CD4-positive, alpha-beta memory T cell (primary cell): ENCODE measurements at regions of chr14 and their contacts with region 1.

Region 1: DNA sequence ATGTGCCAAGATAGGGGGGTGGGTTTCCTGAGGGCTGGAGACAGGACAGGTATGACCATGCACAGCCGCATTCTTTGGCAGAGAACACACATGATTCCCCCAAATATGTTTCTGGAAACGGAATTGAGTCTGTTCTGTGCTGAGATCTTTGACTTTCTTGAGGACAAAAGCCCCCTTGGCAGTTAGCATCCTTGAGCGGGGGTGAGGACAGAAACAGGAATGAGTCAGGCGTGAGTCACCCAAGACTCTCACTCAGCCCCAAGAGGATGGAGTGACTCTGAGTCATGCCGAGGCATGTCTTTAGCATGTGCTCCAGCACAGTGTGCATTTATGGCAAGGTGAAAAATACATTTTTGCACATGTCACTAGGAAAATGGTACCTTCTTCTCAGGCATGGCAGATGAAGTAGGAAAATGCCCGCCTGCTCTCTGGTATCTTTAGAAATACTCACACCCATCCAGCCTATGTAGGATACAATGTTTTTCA is 52.1 kb downstream of the DAD1 start:
- DNase-seq: peak in 4 of 5 donors; percentile 54 to 97 (median 62)
- H3K4me3 ChIP-seq: peak overlapping the region; percentile 13 to 46
- H3K4me3 Mint-ChIP-seq: peak overlapping the region; percentile 69 to 91 (median 85)
- H3K27ac ChIP-seq: peak overlapping the region; percentile 72
- H3K27ac Mint-ChIP-seq: peak overlapping the region; percentile 92 to 100 (median 98)
- H3K4me1 ChIP-seq: peaks cover 99% of the 10 kb centered on the region
- H3K4me1 Mint-ChIP-seq: peaks cover 86 to 100% (median 91%) of the 10 kb centered on the region in 4 donors
- H3K27me3 ChIP-seq: no peaks in the 10 kb centered on the region
- H3K27me3 Mint-ChIP-seq: no peaks in the 10 kb centered on the region

Region 2: GRCh38 chr14:21419528-21419927 is 1117.4 kb before region 1 on chr14:
- CTCF ChIA-PET with region 1: no interaction called
- POLR2A ChIA-PET with region 1: no interaction called
- intact Hi-C with region 1: no loop called
- DNase-seq: no peak
- H3K4me3 ChIP-seq: no peak overlapping the region
- H3K4me3 Mint-ChIP-seq: no peak overlapping the region
- H3K27ac ChIP-seq: no peak overlapping the region
- H3K27ac Mint-ChIP-seq: no peak overlapping the region
- H3K4me1 ChIP-seq: no peaks in the 10 kb centered on the region
- H3K4me1 Mint-ChIP-seq: peaks cover 0 to 3% (median 0%) of the 10 kb centered on the region in 4 donors
- H3K27me3 ChIP-seq: no peaks in the 10 kb centered on the region
- H3K27me3 Mint-ChIP-seq: no peaks in the 10 kb centered on the region

Region 3: GRCh38 chr14:21852061-21852664 is 684.7 kb before region 1 on chr14:
- CTCF ChIA-PET with region 1: no interaction called
- POLR2A ChIA-PET with region 1: interaction called, 10 read pairs
- intact Hi-C with region 1: no loop called
- DNase-seq: peak; percentile 62 to 69 (median 66)
- H3K4me3 ChIP-seq: peak overlapping the region in 1 of 2 donors; percentile 27
- H3K4me3 Mint-ChIP-seq: peak overlapping the region; percentile 77 to 87 (median 82)
- H3K27ac ChIP-seq: no peak overlapping the region
- H3K27ac Mint-ChIP-seq: peak overlapping the region; percentile 58 to 93 (median 81)
- H3K4me1 ChIP-seq: no peaks in the 10 kb centered on the region
- H3K4me1 Mint-ChIP-seq: peaks cover 5 to 14% (median 9%) of the 10 kb centered on the region in 4 donors
- H3K27me3 ChIP-seq: no peaks in the 10 kb centered on the region
- H3K27me3 Mint-ChIP-seq: peaks cover 5 to 12% of the 10 kb centered on the region in 2 donors

Region 4: DNA sequence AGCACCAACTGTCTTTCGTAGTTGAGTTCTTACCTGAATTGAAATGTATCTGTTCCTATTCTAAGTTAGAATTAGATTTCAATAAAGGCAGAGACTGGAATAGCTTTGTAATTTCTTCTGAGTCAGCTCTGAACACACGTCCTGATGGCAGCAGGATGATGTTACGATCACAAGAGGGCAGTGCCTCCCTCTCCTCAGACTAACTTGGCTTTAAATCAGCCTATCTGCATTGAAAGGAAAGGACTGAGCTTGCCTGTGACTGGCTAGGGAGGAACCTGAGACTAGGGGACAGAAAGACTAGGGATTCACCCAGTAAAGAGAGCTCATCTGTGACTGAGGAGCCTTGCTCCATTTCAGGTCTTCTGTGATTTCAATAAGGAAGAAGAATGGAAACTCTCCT is 539.6 kb before region 1 on chr14:
- CTCF ChIA-PET with region 1: interaction called, 9 read pairs
- POLR2A ChIA-PET with region 1: interaction called, 12 read pairs
- intact Hi-C with region 1: no loop called
- DNase-seq: peak; percentile 33 to 58 (median 52)
- H3K4me3 ChIP-seq: peak overlapping the region in 1 of 2 donors; percentile 27
- H3K4me3 Mint-ChIP-seq: peak overlapping the region; percentile 87 to 96 (median 92)
- H3K27ac ChIP-seq: peak overlapping the region; percentile 51
- H3K27ac Mint-ChIP-seq: peak overlapping the region in 6 of 7 donors; percentile 86 to 97 (median 92)
- H3K4me1 ChIP-seq: peaks cover 18% of the 10 kb centered on the region
- H3K4me1 Mint-ChIP-seq: peaks cover 5 to 15% (median 8%) of the 10 kb centered on the region in 4 donors
- H3K27me3 ChIP-seq: no peaks in the 10 kb centered on the region
- H3K27me3 Mint-ChIP-seq: no peaks in the 10 kb centered on the region

Region 5: GRCh38 chr14:22391912-22392421 is 144.9 kb before region 1 on chr14:
- CTCF ChIA-PET with region 1: no interaction called
- POLR2A ChIA-PET with region 1: no interaction called
- intact Hi-C with region 1: no loop called
- DNase-seq: no peak
- H3K4me3 ChIP-seq: no peak overlapping the region
- H3K4me3 Mint-ChIP-seq: no peak overlapping the region
- H3K27ac ChIP-seq: no peak overlapping the region
- H3K27ac Mint-ChIP-seq: no peak overlapping the region
- H3K4me1 ChIP-seq: no peaks in the 10 kb centered on the region
- H3K4me1 Mint-ChIP-seq: no peaks in the 10 kb centered on the region
- H3K27me3 ChIP-seq: no peaks in the 10 kb centered on the region
- H3K27me3 Mint-ChIP-seq: no peaks in the 10 kb centered on the region

Region 6: DNA sequence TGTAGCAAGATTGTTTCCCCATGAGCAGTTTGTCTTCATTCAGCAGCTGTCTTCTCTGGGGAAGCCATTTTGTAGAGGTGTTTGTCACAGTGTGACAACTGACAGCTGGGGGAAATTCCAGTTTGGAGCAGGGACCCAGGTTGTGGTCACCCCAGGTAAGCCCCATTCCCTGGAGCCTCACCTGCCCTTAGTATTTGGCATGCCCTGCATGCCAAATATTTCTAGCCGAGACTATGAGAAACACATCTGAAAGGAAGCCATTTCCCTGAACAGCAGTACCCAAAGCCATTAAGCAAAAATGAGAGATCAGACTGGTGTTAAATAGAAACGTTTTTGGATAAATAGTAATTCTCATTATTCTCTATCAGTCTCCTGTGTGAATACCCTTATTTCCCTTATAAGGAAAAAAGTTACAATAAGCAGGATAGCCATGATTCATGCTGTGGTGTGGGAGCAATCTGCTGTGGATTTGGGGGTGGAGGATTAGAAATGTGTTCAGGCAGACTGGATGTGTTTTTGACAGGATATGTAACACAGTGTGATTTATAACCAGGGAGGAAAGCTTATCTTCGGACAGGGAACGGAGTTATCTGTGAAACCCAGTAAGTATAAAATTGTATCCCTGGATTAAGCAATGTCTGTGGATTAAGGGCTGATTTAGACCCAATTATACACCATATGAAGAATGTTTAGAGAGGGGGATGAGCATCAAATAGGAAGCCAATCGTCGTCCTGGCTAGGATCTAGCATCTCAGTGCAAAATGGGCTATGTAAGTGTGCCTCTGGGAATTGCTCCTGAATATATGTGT is 16.8 kb before region 1 on chr14:
- CTCF ChIA-PET with region 1: interaction called, 11 read pairs
- POLR2A ChIA-PET with region 1: interaction called, 1,012 read pairs
- intact Hi-C with region 1: loop called (anchors 2 kb)
- DNase-seq: no peak
- H3K4me3 ChIP-seq: peak overlapping the region; percentile 2 to 39
- H3K4me3 Mint-ChIP-seq: peak overlapping the region; percentile 83 to 91 (median 90)
- H3K27ac ChIP-seq: peak overlapping the region; percentile 76
- H3K27ac Mint-ChIP-seq: peak overlapping the region; percentile 95 to 100 (median 95)
- H3K4me1 ChIP-seq: peaks cover 98% of the 10 kb centered on the region
- H3K4me1 Mint-ChIP-seq: peaks cover 70 to 98% (median 84%) of the 10 kb centered on the region in 4 donors
- H3K27me3 ChIP-seq: no peaks in the 10 kb centered on the region
- H3K27me3 Mint-ChIP-seq: no peaks in the 10 kb centered on the region

Region 7: DNA sequence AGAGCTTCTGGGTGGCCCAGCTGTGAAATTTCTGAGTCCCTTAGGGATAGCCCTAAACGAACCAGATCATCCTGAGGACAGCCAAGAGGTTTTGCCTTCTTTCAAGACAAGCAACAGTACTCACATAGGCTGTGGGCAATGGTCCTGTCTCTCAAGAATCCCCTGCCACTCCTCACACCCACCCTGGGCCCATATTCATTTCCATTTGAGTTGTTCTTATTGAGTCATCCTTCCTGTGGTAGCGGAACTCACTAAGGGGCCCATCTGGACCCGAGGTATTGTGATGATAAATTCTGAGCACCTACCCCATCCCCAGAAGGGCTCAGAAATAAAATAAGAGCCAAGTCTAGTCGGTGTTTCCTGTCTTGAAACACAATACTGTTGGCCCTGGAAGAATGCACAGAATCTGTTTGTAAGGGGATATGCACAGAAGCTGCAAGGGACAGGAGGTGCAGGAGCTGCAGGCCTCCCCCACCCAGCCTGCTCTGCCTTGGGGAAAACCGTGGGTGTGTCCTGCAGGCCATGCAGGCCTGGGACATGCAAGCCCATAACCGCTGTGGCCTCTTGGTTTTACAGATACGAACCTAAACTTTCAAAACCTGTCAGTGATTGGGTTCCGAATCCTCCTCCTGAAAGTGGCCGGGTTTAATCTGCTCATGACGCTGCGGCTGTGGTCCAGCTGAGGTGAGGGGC is 13.2 kb after region 1 on chr14:
- CTCF ChIA-PET with region 1: interaction called, 81 read pairs
- POLR2A ChIA-PET with region 1: interaction called, 1,762 read pairs
- intact Hi-C with region 1: loop called (anchors 1 kb)
- DNase-seq: peak; percentile 58 to 96 (median 63)
- H3K4me3 ChIP-seq: peak overlapping the region; percentile 3 to 7
- H3K4me3 Mint-ChIP-seq: peak overlapping the region; percentile 64 to 91 (median 78)
- H3K27ac ChIP-seq: peak overlapping the region; percentile 97
- H3K27ac Mint-ChIP-seq: peak overlapping the region; percentile 97 to 100 (median 100)
- H3K4me1 ChIP-seq: peaks cover 99% of the 10 kb centered on the region
- H3K4me1 Mint-ChIP-seq: peaks cover 87 to 97% (median 93%) of the 10 kb centered on the region in 4 donors
- H3K27me3 ChIP-seq: no peaks in the 10 kb centered on the region
- H3K27me3 Mint-ChIP-seq: no peaks in the 10 kb centered on the region

Region 8: GRCh38 chr14:22622255-22622654 is 85.4 kb after region 1 on chr14:
- CTCF ChIA-PET with region 1: no interaction called
- POLR2A ChIA-PET with region 1: no interaction called
- intact Hi-C with region 1: no loop called
- DNase-seq: no peak
- H3K4me3 ChIP-seq: no peak overlapping the region
- H3K4me3 Mint-ChIP-seq: no peak overlapping the region
- H3K27ac ChIP-seq: no peak overlapping the region
- H3K27ac Mint-ChIP-seq: no peak overlapping the region
- H3K4me1 ChIP-seq: no peaks in the 10 kb centered on the region
- H3K4me1 Mint-ChIP-seq: no peaks in the 10 kb centered on the region
- H3K27me3 ChIP-seq: no peaks in the 10 kb centered on the region
- H3K27me3 Mint-ChIP-seq: peaks cover 3 to 8% of the 10 kb centered on the region in 2 donors

Region 9: DNA sequence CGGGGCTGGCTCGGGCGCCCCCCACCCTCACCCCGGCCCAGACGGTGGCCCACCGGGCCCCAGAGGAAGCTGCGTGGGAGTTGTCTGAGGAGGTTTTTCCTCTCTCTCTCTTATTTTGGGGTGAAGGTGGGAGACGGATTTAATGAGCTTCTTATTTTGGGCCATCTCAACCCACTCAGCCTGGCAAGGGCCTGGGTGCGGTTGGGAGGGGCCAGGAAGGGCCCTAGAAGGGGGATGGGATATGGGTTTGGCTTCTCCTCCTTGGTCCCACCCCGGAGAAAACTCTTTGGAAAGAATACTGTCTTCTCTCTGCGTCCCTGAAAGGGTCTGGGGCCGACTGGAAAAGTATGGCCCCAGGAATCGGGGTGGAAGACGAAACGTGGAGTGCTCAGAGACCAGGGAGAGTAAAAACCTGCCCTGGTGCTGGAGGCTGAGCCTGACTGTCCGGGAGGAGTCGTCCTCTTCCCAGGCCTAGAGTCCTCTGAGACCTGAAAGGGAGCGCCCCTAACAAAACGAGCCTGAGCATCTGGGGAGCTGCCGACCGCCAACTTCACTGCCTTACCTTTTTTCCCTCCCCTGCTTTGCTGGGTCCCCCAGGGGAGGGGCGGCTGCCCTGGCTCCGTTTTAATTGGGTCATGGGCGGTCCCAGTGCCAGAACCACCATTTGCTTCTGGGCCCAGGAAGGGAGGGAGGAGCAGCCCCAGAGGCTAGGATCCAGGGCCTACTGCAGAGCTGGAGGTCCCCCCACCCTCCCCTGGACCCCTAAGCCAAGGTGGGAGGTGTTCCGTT is 301.0 kb after region 1 on chr14:
- CTCF ChIA-PET with region 1: no interaction called
- POLR2A ChIA-PET with region 1: no interaction called
- intact Hi-C with region 1: no loop called
- DNase-seq: no peak
- H3K4me3 ChIP-seq: no peak overlapping the region
- H3K4me3 Mint-ChIP-seq: peak overlapping the region in 2 of 8 donors; percentile 44 to 56
- H3K27ac ChIP-seq: no peak overlapping the region
- H3K27ac Mint-ChIP-seq: no peak overlapping the region
- H3K4me1 ChIP-seq: peaks cover 11% of the 10 kb centered on the region
- H3K4me1 Mint-ChIP-seq: peaks cover 1 to 15% (median 8%) of the 10 kb centered on the region in 4 donors
- H3K27me3 ChIP-seq: peaks cover 13% of the 10 kb centered on the region
- H3K27me3 Mint-ChIP-seq: peaks cover 8 to 25% of the 10 kb centered on the region in 2 donors